GM12878 (cell line): ENCODE measurements at regions of chr7 and their contacts with region 1.

Region 1: GRCh38 chr7:90708841-90709317 is 112.8 kb downstream of the CDK14 start:
- DNase-seq: peak; percentile 67
- ATAC-seq: peak; percentile 71
- H3K4me3 ChIP-seq: peak overlapping the region; percentile 64
- H3K27ac ChIP-seq: peak overlapping the region; percentile 78
- H3K4me1 ChIP-seq: peaks cover 7% of the 10 kb centered on the region
- H3K27me3 ChIP-seq: no peaks in the 10 kb centered on the region
- CTCF ChIP-seq: peak; percentile 84 to 93 (median 88)
- EP300 ChIP-seq: no peak
- POLR2A ChIP-seq: no peak
- RAD21 ChIP-seq: peak; percentile 89

Region 2: DNA sequence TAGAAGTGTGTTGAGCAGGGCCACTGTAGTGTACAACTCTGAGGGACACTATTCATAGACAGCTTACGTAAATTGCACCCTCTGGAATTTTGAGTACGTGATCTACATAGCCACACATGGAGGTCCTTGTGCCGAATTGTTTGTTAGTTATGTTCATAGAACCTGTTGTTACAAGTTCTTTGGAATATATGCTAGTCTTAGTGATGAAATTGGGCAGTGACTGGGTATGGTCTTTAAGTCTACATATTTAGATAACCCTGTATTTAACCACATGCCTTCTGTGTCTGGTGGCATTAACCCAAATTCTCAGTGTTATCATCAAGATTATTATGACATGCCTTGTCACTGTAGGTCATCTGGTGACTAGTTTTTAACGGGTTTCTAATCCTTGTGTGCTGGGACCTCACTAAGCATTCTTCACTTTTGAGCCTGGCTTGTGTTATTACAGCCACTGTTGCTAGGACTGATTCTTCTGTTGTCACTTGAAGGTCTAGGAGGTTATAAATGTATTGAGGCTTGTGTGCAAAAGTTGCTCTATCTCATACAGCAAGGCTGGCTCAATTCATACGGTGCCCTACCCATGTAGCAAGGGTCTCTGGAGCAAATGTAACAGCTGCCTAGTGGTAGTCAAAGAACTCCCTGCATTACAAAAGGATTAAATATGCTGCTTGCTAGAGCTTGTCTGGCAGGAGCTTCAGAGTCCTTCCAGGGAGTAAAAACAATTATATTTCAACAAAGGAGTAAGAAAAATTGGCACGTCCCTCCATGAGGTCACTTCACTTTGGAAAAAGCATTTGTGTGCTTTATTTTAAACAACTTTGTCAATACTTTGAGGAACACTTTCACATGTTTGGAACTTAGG is 47.4 kb before region 1 on chr7:
- CTCF ChIA-PET with region 1: interaction called, 6 read pairs
- POLR2A ChIA-PET with region 1: no interaction called
- RAD21 ChIA-PET with region 1: interaction called, 5 read pairs
- SMC1A ChIA-PET with region 1: interaction called, 12 read pairs
- in situ Hi-C with region 1: no loop called
- intact Hi-C with region 1: no loop called
- DNase-seq: no peak
- ATAC-seq: peak; percentile 50
- H3K4me3 ChIP-seq: no peak overlapping the region
- H3K27ac ChIP-seq: peak overlapping the region; percentile 11; the same call in 1 of the 2 replicates
- H3K4me1 ChIP-seq: peaks cover 31% of the 10 kb centered on the region
- H3K27me3 ChIP-seq: no peaks in the 10 kb centered on the region
- CTCF ChIP-seq: no peak
- EP300 ChIP-seq: no peak
- POLR2A ChIP-seq: no peak
- RAD21 ChIP-seq: no peak

Region 3: GRCh38 chr7:90736968-90737939 is 28.4 kb after region 1 on chr7:
- CTCF ChIA-PET with region 1: interaction called, 15 read pairs
- POLR2A ChIA-PET with region 1: interaction called, 4 read pairs
- RAD21 ChIA-PET with region 1: interaction called, 15 read pairs
- SMC1A ChIA-PET with region 1: interaction called, 41 read pairs
- in situ Hi-C with region 1: no loop called
- intact Hi-C with region 1: no loop called
- DNase-seq: peak; percentile 86
- ATAC-seq: peak; percentile 93
- H3K4me3 ChIP-seq: peak overlapping the region; percentile 10; the same call in 1 of the 2 replicates
- H3K27ac ChIP-seq: peak overlapping the region; percentile 81
- H3K4me1 ChIP-seq: peaks cover 20% of the 10 kb centered on the region
- H3K27me3 ChIP-seq: no peaks in the 10 kb centered on the region
- CTCF ChIP-seq: no peak
- EP300 ChIP-seq: peak; percentile 86 to 99
- POLR2A ChIP-seq: no peak
- RAD21 ChIP-seq: no peak

Region 4: GRCh38 chr7:90766814-90767564 is 58.1 kb after region 1 on chr7:
- CTCF ChIA-PET with region 1: interaction called, 7 read pairs
- POLR2A ChIA-PET with region 1: interaction called, 3 read pairs
- RAD21 ChIA-PET with region 1: interaction called, 6 read pairs
- SMC1A ChIA-PET with region 1: interaction called, 14 read pairs
- in situ Hi-C with region 1: no loop called
- intact Hi-C with region 1: no loop called
- DNase-seq: no peak
- ATAC-seq: no peak; the same call in 2 of the 3 replicates
- H3K4me3 ChIP-seq: no peak overlapping the region
- H3K27ac ChIP-seq: no peak overlapping the region
- H3K4me1 ChIP-seq: no peaks in the 10 kb centered on the region
- H3K27me3 ChIP-seq: no peaks in the 10 kb centered on the region
- CTCF ChIP-seq: no peak
- EP300 ChIP-seq: no peak
- POLR2A ChIP-seq: no peak
- RAD21 ChIP-seq: no peak

Region 5: GRCh38 chr7:90931986-90932916 is 223.4 kb after region 1 on chr7:
- CTCF ChIA-PET with region 1: interaction called, 71 read pairs
- POLR2A ChIA-PET with region 1: interaction called, 3 read pairs
- RAD21 ChIA-PET with region 1: interaction called, 55 read pairs
- SMC1A ChIA-PET with region 1: interaction called, 41 read pairs
- in situ Hi-C with region 1: no loop called
- intact Hi-C with region 1: loop called (anchors 2 kb)
- DNase-seq: peak; percentile 73
- ATAC-seq: peak; percentile 98
- H3K4me3 ChIP-seq: no peak overlapping the region; the same call in none of the 2 replicates
- H3K27ac ChIP-seq: peak overlapping the region; percentile 54
- H3K4me1 ChIP-seq: peaks cover 22% of the 10 kb centered on the region
- H3K27me3 ChIP-seq: no peaks in the 10 kb centered on the region
- CTCF ChIP-seq: peak in 2 of 3 experiments; percentile 5 to 44; a peak in 2 of 6 replicates
- EP300 ChIP-seq: no peak; a peak in 1 of 4 replicates
- POLR2A ChIP-seq: no peak
- RAD21 ChIP-seq: peak; percentile 58

Region 6: DNA sequence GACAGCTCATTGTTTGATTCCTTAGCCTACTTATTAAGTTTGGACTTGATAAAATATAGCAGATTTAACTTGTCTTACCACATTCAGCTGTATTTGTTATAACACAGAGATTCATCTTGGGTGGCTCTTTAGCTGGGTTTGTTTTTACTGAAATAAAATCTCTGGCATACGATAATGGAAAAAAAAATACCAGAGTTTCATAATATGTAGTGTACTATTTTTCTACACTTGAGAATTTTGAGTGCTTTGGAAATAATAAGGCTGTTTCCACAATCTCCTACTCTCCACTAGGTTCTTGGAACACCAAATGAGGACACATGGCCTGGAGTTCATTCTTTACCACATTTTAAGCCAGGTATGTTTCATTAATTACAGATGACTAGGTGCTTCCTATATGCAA is 336.7 kb after region 1 on chr7:
- CTCF ChIA-PET with region 1: interaction called, 11 read pairs
- POLR2A ChIA-PET with region 1: no interaction called
- RAD21 ChIA-PET with region 1: interaction called, 3 read pairs
- SMC1A ChIA-PET with region 1: interaction called, 13 read pairs
- in situ Hi-C with region 1: no loop called
- intact Hi-C with region 1: no loop called
- DNase-seq: no peak
- ATAC-seq: no peak
- H3K4me3 ChIP-seq: no peak overlapping the region
- H3K27ac ChIP-seq: no peak overlapping the region
- H3K4me1 ChIP-seq: no peaks in the 10 kb centered on the region; the same call in 1 of the 2 replicates
- H3K27me3 ChIP-seq: no peaks in the 10 kb centered on the region
- CTCF ChIP-seq: no peak
- EP300 ChIP-seq: no peak
- POLR2A ChIP-seq: no peak
- RAD21 ChIP-seq: no peak

Region 7: GRCh38 chr7:91299952-91300775 is 591.3 kb after region 1 on chr7:
- CTCF ChIA-PET with region 1: no interaction called
- POLR2A ChIA-PET with region 1: no interaction called
- RAD21 ChIA-PET with region 1: no interaction called
- SMC1A ChIA-PET with region 1: no interaction called
- in situ Hi-C with region 1: no loop called
- intact Hi-C with region 1: no loop called
- DNase-seq: no peak
- ATAC-seq: no peak
- H3K4me3 ChIP-seq: no peak overlapping the region
- H3K27ac ChIP-seq: no peak overlapping the region
- H3K4me1 ChIP-seq: no peaks in the 10 kb centered on the region
- H3K27me3 ChIP-seq: peaks cover 0 to 2% of the 10 kb centered on the region in 2 experiments; a peak in 2 of 4 replicates
- CTCF ChIP-seq: no peak
- EP300 ChIP-seq: no peak
- POLR2A ChIP-seq: no peak
- RAD21 ChIP-seq: no peak